Activated CD4-positive, alpha-beta T cell treated with anti-CD3 and anti-CD28 coated beads, Interleukin-2, amount 10 ng/mL, durations not matched to agents 24 days and 14 days (primary cell): ENCODE measurements at regions of chr20 and their contacts with region 1.

Region 1: DNA sequence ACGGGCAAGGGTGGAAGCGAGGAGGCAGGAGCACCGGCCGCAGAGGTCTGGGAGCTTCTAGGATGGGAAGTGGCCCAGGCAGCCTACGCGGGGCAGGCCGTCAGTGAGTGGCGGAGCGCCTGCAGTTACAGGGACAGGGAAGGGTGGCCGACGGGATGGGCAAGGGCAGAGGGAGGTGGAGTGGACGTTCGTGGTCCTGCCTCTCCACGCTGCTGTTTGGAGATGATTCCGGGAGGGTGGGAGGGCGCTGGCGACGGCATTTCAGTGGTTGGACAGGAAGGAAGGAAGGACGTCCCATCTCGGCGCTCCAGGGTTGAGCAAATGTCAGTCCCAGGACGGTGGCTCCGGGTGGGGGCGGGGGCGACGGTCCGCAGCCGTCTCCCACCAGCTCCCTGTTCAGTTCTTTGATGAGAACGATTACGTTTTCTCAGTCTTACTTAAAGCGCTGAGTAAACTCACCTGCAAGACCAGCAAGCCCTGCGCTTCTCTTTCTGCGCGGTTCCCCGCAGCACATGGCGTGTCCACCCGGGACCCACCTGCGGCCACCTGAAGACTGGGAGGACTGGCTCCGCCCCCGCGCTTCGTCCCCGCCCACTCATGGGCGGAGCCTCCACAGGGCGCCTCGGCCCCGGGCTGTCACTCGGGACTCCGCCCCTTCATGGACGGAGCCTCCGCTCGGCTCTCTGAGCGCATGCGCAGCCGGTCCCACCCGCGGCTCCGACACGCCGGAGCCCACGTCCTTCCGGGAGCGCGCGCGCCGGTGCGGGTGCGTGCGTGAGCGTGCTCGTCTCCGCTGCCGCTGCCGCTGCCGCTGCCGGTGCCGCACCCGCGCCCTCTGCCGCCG is at the start of gene DNAJC5:
- DNase-seq: peak; percentile 100
- H3K4me3 Mint-ChIP-seq: peak within 1 kb of the TSS; percentile 90
- H3K27ac Mint-ChIP-seq: peak within 1 kb of the TSS; percentile 94
- H3K4me1 Mint-ChIP-seq: peaks cover 35% of the 10 kb centered on the region
- H3K27me3 Mint-ChIP-seq: peaks cover 3% of the 10 kb centered on the region
- total RNA-seq, gene DNAJC5: 42.3 and 43.1 TPM in 2 replicates

Region 2: DNA sequence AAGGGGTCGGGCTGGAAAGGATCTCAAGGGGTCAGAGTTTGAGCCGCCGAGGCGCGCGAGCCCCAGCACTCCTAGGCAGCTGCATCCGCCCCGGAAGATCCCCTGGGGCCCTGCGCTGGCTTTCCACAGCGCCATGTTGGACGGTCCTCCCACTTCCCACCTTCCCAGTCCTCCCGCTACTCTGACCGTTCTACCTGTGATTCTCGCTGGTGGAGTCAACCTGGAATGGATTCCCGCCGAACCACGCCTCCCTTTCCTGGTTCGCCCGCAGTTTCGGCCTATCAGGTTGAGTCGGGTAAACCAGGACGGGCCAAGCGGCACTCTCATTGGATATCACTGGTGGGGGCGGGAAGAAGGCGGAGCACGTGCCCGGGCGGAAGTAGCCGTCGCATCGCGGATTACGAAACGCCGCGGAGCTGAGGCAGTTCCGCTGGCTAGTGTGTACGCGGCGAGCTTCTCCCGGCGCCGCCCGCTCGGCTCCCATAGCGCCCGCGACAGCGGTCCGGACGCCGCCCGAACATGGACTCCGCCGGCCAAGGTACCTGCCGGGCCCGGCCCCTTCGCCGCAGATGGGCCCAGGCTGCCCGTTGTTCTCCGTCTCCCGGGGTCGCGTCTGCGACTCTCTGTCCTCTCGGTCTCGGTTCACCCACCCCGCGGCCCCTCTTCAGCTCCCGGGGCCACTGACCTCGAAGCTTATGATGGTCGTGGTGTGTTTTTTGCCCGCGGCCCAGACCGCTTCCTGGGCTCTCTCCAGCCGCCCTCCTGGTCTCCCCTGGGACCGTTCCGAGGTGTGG is 29.5 kb before region 1 on chr20 and contains the start of gene TPD52L2:
- intact Hi-C with region 1: loop called (anchors 2 kb)
- DNase-seq: peak; percentile 99
- H3K4me3 Mint-ChIP-seq: peak within 1 kb of the TSS; percentile 87
- H3K27ac Mint-ChIP-seq: peak within 1 kb of the TSS; percentile 100
- H3K4me1 Mint-ChIP-seq: peaks cover 25% of the 10 kb centered on the region
- H3K27me3 Mint-ChIP-seq: no peaks in the 10 kb centered on the region
- total RNA-seq, gene TPD52L2: 75.9 and 78.8 TPM in 2 replicates

Region 3: GRCh38 chr20:63873477-63873971 is 21.1 kb before region 1 on chr20:
- intact Hi-C with region 1: loop called (anchors 1 kb)
- DNase-seq: peak; percentile 85
- H3K4me3 Mint-ChIP-seq: peak overlapping the region; percentile 11
- H3K27ac Mint-ChIP-seq: peak overlapping the region; percentile 85
- H3K4me1 Mint-ChIP-seq: peaks cover 16% of the 10 kb centered on the region
- H3K27me3 Mint-ChIP-seq: no peaks in the 10 kb centered on the region

Region 4: DNA sequence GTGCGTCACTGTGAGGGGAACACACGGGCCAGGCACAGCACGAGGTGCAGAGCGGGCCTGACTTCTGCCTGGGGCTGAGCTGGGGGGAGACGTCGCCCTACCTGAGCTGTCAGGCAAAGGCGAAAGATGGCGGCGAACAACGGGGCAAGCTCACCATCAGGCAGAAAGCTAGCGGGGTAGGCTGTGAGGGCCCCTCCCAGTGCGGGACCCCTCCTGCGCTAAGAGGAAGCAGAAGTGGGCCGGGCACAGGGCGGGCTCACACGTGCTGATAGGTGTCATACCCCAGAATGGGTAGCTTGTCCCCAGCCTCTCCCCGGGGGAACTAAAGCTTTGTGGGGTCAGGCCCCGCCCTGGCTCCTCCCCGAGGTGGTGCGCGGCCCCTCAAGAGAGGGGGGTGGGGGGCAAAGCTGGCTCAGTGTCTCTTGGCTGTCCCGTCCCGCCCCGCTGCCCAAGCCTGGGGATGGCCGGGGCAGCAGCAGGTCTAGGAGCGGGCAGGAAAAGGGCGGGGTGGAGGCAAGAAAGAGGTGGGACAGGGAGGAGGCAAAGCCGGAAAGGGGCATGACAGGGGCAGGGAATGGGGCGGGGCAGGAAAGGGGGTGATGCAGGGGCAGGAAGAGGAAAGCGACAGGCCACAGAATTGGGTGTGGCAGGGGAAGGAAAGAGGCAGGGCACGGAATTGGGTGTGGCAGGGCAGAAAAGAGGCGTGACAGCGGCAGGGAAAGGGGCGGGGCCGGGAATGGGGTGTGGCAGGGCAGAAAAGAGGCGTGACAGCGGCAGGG is 46.9 kb after region 1 on chr20:
- intact Hi-C with region 1: loop called (anchors 2 kb)
- DNase-seq: peak; percentile 95
- H3K4me3 Mint-ChIP-seq: peak overlapping the region; percentile 43
- H3K27ac Mint-ChIP-seq: peak overlapping the region; percentile 74
- H3K4me1 Mint-ChIP-seq: peaks cover 8% of the 10 kb centered on the region
- H3K27me3 Mint-ChIP-seq: no peaks in the 10 kb centered on the region

Region 5: GRCh38 chr20:63955827-63956663 is 61.5 kb after region 1 on chr20 and contains the start of gene UCKL1:
- intact Hi-C with region 1: loop called (anchors 5 kb)
- DNase-seq: peak; percentile 97
- H3K4me3 Mint-ChIP-seq: peak within 1 kb of the TSS; percentile 85
- H3K27ac Mint-ChIP-seq: peak within 1 kb of the TSS; percentile 88
- H3K4me1 Mint-ChIP-seq: peaks cover 28% of the 10 kb centered on the region
- H3K27me3 Mint-ChIP-seq: no peaks in the 10 kb centered on the region
- total RNA-seq, gene UCKL1: 48.1 and 49.5 TPM in 2 replicates